HepG2 (cell line): ENCODE measurements at regions of chr7 and their contacts with region 1.

Region 1: GRCh38 chr7:1225441-1226185 is 7.1 kb upstream of the UNCX start:
- DNase-seq: no peak
- ATAC-seq: peak; percentile 67
- H3K4me3 ChIP-seq: no peak overlapping the region
- H3K27ac ChIP-seq: no peak overlapping the region
- H3K4me1 ChIP-seq: no peaks in the 10 kb centered on the region
- H3K27me3 ChIP-seq: peaks cover 12 to 87% of the 10 kb centered on the region in 2 experiments
- CTCF ChIP-seq: peak; percentile 76
- EP300 ChIP-seq: no peak
- POLR2A ChIP-seq: no peak
- RAD21 ChIP-seq: peak; percentile 83

Region 2: GRCh38 chr7:1255131-1256032 is 29.8 kb after region 1 on chr7:
- CTCF ChIA-PET with region 1: no interaction called
- POLR2A ChIA-PET with region 1: no interaction called
- in situ Hi-C with region 1: no loop called
- intact Hi-C with region 1: no loop called
- DNase-seq: no peak
- ATAC-seq: no peak; the same call in 2 of the 3 replicates
- H3K4me3 ChIP-seq: no peak overlapping the region
- H3K27ac ChIP-seq: no peak overlapping the region
- H3K4me1 ChIP-seq: peaks cover 20% of the 10 kb centered on the region; the same call in 1 of the 2 replicates
- H3K27me3 ChIP-seq: peaks cover 20 to 87% of the 10 kb centered on the region in 2 experiments; a peak in 4 of 5 replicates
- CTCF ChIP-seq: no peak
- EP300 ChIP-seq: no peak
- POLR2A ChIP-seq: no peak
- RAD21 ChIP-seq: no peak

Region 3: GRCh38 chr7:1397491-1398327 is 172.1 kb after region 1 on chr7:
- CTCF ChIA-PET with region 1: no interaction called
- POLR2A ChIA-PET with region 1: no interaction called
- in situ Hi-C with region 1: loop called (anchors 10 kb)
- intact Hi-C with region 1: no loop called
- DNase-seq: no peak
- ATAC-seq: no peak
- H3K4me3 ChIP-seq: no peak overlapping the region
- H3K27ac ChIP-seq: no peak overlapping the region
- H3K4me1 ChIP-seq: peaks cover 6% of the 10 kb centered on the region; the same call in 1 of the 2 replicates
- H3K27me3 ChIP-seq: peaks cover 13 to 77% of the 10 kb centered on the region in 2 experiments; a peak in 4 of 5 replicates
- CTCF ChIP-seq: no peak
- EP300 ChIP-seq: no peak
- POLR2A ChIP-seq: no peak
- RAD21 ChIP-seq: no peak

Region 4: GRCh38 chr7:1412322-1413261 is 187.0 kb after region 1 on chr7:
- CTCF ChIA-PET with region 1: interaction called, 33 read pairs
- POLR2A ChIA-PET with region 1: no interaction called
- in situ Hi-C with region 1: no loop called
- intact Hi-C with region 1: loop called (anchors 5 kb)
- DNase-seq: peak; percentile 69
- ATAC-seq: peak; percentile 83
- H3K4me3 ChIP-seq: peak overlapping the region in 1 of 3 experiments; percentile 39; a peak in 1 of 6 replicates
- H3K27ac ChIP-seq: no peak overlapping the region
- H3K4me1 ChIP-seq: no peaks in the 10 kb centered on the region
- H3K27me3 ChIP-seq: peaks cover 6 to 39% of the 10 kb centered on the region in 2 experiments
- CTCF ChIP-seq: peak; percentile 92
- EP300 ChIP-seq: no peak
- POLR2A ChIP-seq: no peak
- RAD21 ChIP-seq: peak; percentile 95

Region 5: DNA sequence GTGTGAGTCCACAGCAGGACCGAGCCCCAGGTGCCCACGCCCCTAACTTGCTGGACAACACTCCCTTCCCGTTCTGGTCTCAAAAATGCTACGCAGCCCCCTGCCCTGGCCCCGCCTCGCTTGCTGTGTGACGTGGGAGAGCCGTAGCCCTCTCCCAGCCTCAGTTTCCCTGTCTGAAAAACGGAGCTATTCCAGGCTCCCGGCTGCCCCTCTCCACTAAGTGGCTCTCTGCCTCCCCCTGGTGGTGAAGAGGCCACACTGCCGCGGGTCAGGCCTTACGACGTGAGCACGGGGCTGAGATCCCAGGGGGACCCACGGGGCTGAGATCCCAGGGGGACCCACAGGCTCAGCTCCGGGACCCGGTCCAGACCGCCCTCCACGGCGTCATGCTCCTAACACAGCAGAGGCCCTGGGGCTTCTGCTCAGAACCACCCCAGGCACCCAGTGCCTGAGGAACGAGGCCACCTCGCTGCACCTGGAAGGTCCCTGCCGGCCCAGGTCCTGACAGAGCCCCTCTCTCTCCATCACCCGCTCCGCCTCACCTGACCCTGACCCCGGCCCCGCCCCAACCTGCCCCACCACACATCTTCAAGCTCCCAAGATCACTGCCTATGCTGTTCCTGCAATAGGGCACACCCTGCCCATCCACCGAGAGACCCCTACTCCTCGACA is 206.9 kb after region 1 on chr7:
- CTCF ChIA-PET with region 1: interaction called, 13 read pairs
- POLR2A ChIA-PET with region 1: no interaction called
- in situ Hi-C with region 1: no loop called
- intact Hi-C with region 1: no loop called
- DNase-seq: peak; percentile 35
- ATAC-seq: peak; percentile 67
- H3K4me3 ChIP-seq: peak overlapping the region in 1 of 3 experiments; percentile 23; a peak in 1 of 6 replicates
- H3K27ac ChIP-seq: no peak overlapping the region
- H3K4me1 ChIP-seq: peaks cover 47% of the 10 kb centered on the region
- H3K27me3 ChIP-seq: peaks cover 3 to 10% of the 10 kb centered on the region in 2 experiments; a peak in 1 of 5 replicates
- CTCF ChIP-seq: peak; percentile 92
- EP300 ChIP-seq: no peak
- POLR2A ChIP-seq: no peak
- RAD21 ChIP-seq: peak; percentile 72